ENCODE measurements at regions of chr3 and their contacts with region 1.

Region 1: DNA sequence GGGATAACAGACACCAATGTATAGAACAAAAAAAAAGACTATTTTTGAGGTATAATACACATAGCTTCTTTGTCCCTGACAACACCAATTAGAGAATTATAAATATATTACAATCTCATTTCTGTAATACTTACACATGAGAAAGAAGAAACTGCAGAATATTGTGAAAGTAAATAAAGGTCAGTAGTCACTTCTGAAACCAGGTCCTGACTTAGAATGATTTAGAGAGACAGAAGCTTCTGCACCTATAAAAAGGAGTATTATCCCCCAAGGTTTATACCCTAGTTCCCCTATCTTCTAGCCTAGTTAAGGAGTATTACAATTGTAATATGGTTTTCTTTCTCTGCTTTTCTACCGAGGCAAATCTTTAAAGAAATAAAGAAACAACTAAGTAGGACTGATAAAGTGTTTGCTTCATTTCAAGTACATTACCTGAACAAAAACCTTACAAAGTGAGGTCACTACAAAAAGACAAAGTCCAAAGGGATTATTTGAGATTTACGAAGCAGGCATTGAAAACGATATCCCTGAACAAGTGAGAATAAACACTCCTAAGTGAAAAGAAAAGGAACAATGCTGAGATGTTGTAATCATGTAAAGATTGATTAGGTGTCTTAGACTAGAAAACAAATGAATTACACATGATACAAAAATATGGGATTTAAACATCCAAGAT is 103.0 kb downstream of the GBE1 start:
- DNase-seq: no peak
- ATAC-seq: no peak
- H3K4me3 ChIP-seq: no peak overlapping the region
- H3K27ac ChIP-seq: no peak overlapping the region
- H3K4me1 ChIP-seq: peaks cover 0 to 11% (median 2%) of the 10 kb centered on the region in 12 donors
- H3K27me3 ChIP-seq: no peaks in the 10 kb centered on the region
- CTCF ChIP-seq: no peak
- POLR2A ChIP-seq: no peak

Region 2: GRCh38 chr3:81788610-81789009 is 130.2 kb after region 1 on chr3:
- intact Hi-C with region 1: no loop called
- DNase-seq: no peak
- ATAC-seq: peak; percentile 90 to 97 (median 94)
- H3K4me3 ChIP-seq: peak overlapping the region in 1 of 12 donors; percentile 27
- H3K27ac ChIP-seq: peak overlapping the region in 11 of 12 donors; percentile 44 to 78 (median 64)
- H3K4me1 ChIP-seq: peaks cover 0 to 27% (median 21%) of the 10 kb centered on the region in 12 donors
- H3K27me3 ChIP-seq: no peaks in the 10 kb centered on the region
- CTCF ChIP-seq: no peak
- POLR2A ChIP-seq: peak in 1 of 2 donors; percentile 9

Region 3: DNA sequence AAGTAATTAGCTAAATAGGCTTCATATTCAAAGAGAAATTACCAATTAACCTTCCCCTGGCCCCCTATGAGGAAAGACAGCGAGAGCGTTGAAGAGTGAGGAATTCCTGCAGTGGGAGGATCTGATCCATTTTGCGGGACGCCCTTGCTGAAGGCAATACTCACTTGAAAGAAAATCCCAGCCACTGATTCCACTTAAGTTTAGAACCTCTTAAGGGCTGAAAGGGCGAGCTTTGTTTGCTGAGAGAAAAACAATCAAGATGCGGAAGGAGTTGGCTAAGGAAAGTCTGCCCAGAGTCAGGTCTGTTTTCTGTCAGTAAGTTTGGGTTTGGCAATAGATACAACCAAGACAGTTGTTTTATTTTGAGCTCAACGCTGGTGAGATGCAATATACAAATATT is 205.8 kb after region 1 on chr3:
- intact Hi-C with region 1: loop called in 1 of 10 experiments (anchors 10 kb)
- DNase-seq: no peak
- ATAC-seq: peak in 3 of 4 donors; percentile 27 to 38 (median 30)
- H3K4me3 ChIP-seq: peak overlapping the region in 8 of 12 donors; percentile 5 to 32 (median 24)
- H3K27ac ChIP-seq: peak overlapping the region in 3 of 12 donors; percentile 3 to 12 (median 5)
- H3K4me1 ChIP-seq: peaks cover 0 to 7% (median 0%) of the 10 kb centered on the region in 12 donors
- H3K27me3 ChIP-seq: no peaks in the 10 kb centered on the region
- CTCF ChIP-seq: no peak
- POLR2A ChIP-seq: no peak